GM10248 (cell line): ENCODE measurements at regions of chr22 and their contacts with region 1.

Region 1: DNA sequence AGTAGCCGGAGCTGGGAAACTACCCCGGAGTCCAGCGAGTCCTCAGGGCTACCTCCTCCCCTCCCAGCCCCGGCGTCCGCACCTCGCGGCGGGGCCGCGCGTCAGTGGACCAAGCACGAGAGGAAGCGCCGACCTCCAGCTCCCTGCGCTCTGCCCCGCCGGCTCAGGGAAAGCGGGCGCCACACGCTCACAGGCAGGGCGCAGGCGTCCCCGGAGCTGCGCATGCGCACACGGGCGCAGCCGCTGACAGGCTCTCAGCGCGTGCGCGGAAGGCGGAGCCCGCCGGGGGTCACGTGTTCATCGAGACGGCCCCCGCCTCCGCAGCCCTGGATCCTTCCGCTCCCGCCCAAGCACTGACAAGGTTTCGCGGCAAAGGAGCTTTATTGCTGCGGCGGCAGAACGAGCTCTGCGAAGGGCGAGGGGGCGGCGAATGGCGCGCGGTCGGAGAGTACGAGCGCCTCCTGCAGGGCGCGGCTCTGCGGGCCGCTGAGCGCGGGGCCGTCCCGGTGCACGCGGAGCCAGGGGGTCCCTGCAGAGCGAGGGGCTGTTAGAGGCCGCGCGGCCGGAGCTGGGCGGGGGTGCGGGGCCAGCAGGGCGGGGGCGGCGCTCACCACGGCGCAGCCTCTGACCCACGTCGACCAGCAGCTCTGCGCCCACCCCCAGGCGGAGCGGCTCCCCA is at the start of gene SCO2:
- DNase-seq: peak; percentile 97
- CTCF ChIP-seq: peak; percentile 64

Region 2: GRCh38 chr22:50469377-50470305 is 55.9 kb before region 1 on chr22:
- CTCF ChIA-PET with region 1: interaction called, 10 read pairs
- POLR2A ChIA-PET with region 1: no interaction called
- DNase-seq: peak; percentile 92
- CTCF ChIP-seq: no peak

Region 3: GRCh38 chr22:50490531-50491308 is 34.8 kb before region 1 on chr22:
- CTCF ChIA-PET with region 1: no interaction called
- POLR2A ChIA-PET with region 1: no interaction called
- DNase-seq: no peak
- CTCF ChIP-seq: no peak

Region 4: DNA sequence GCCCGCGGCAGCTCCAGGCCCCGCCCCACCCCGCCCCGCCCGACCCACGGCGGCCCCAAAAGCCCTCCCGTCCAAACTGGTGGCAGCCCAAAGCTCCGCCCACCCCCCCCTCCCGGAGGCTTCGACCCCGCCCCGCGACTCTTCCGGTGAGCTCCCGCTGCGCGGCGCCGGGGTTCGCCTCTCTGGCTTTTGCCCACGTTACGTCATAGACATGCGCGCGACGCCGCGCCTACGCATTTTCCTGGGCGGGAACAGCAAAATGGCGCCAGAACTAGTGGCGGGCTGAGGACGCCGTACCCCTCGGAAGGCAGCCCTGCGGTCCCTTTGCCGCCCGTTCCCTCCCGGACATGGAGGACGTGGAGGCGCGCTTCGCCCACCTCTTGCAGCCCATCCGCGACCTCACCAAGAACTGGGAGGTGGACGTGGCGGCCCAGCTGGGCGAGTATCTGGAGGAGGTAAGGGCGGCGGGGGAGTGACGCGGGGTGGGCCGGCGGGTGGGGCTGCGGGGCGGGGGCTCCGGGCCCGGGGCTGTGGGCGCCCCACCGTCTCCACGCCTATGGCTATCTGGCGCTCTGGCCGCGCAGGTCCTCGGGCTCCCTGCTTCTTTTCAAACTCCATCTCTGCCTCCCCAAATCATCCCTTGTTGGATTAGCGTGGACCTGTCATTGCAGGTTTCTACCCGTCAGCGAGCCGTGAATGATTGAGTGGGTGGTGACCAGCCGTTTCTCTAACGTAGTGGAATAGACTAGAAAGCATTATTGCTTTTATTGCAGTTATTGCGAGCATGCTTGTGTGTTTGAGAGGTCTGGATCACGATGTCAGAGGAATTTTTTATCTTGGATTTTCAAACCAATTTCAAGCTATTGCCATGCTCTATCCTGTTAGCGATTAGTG is 17.3 kb before region 1 on chr22 and contains the start of gene NCAPH2:
- CTCF ChIA-PET with region 1: interaction called, 56 read pairs
- POLR2A ChIA-PET with region 1: interaction called, 33 read pairs
- DNase-seq: peak; percentile 100
- CTCF ChIP-seq: no peak

Region 5: GRCh38 chr22:50544078-50544745 is 18.7 kb after region 1 on chr22:
- CTCF ChIA-PET with region 1: interaction called, 136 read pairs
- POLR2A ChIA-PET with region 1: interaction called, 15 read pairs
- DNase-seq: peak; percentile 78
- CTCF ChIP-seq: peak; percentile 73